ENCODE measurements at regions of chr7 and their contacts with region 1.

Region 1: DNA sequence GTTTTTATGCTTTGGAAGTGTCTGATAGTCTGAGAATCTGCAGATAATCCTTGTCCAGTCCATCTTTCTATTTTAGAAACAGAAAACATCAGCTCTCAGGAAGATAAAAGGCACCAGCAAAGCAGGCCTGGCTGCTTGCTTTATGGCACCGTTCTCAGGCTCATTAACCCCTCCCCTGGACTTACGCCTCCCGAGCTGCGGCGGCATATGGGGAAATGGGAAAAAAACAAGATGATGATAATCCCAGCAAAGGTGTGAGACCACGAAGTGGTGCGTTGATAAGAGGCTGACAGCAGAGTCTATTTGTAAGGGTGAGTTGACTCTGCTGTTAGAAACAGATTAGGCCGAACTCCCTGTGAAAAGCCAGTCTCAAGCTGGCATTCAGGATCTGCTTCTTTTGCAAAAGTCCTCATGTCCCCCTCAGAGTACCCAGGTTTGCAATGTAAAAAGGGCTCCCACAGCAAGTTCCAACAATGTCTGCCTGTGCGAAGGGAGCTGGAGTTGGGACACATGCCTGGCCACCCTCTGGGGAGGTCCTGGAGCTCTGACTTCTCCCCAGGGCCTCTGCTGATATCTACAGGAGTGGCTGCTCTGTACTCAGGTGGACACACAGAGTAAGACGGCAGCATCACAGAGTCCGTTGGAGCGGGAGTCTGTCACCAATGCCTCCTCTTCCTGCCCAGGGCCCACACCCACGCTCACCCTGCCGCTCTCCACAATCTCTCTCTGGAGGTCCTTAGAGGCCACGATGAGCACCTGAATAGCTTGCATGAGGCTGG is 54.3 kb downstream of the SPDYE5 start:
- DNase-seq: no peak
- H3K4me3 ChIP-seq: no peak overlapping the region
- H3K27ac ChIP-seq: peak overlapping the region in 1 of 59 donors; percentile 24
- H3K27me3 ChIP-seq: no peaks in the 10 kb centered on the region
- CTCF ChIP-seq: no peak

Region 2: DNA sequence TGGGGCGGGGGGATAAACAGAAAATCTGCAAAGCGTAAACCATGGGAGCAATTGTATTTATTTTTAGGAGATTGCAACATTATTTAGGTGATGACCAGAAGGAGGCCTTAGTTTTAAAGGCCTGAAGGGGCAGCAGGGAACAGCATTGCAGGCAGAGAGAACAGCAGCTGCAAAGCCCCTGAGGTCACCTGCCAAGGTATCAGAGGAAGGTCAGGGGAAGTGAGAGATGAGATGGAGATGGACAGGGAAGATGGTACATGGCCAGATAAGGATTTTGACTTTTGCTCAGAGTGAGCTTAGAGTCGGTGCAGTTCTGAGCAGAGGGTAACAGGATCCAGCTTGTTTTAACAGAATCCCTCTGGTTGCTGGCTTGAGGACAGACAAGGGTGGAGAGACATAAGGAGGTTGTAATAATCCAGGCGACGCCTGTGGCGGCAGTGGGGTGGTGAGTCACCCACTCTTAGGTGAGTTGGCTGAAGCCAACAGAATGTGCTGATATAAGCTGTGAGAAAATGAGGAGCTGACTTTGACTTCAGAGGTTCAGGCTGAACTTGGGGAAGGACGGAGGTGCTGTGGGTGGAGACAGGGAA is 971.2 kb before region 1 on chr7:
- intact Hi-C with region 1: loop called in 1 of 2 experiments (anchors 10 kb)
- DNase-seq: peak in 1 of 10 donors; percentile 10
- H3K4me3 ChIP-seq: no peak overlapping the region
- H3K27ac ChIP-seq: no peak overlapping the region
- H3K27me3 ChIP-seq: no peaks in the 10 kb centered on the region
- CTCF ChIP-seq: no peak

Region 3: DNA sequence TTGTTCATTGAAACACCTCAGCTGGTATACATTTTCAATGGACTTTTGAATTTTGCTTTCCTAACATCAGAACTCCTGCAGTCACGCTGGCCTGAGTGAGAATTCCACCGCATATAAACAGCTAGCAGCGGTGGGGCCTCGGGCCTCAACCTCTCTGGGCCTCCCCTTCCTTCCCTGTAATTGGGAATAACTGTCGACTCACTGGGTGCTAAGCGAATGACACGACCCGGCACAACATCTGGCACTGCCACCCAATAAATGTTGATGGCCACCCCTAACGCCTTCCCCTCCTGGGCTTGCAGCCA is 473.5 kb before region 1 on chr7:
- intact Hi-C with region 1: no loop called
- DNase-seq: no peak
- H3K4me3 ChIP-seq: peak overlapping the region; percentile 70 to 98 (median 88)
- H3K27ac ChIP-seq: peak overlapping the region in 58 of 59 donors; percentile 57 to 97 (median 92)
- H3K27me3 ChIP-seq: no peaks in the 10 kb centered on the region
- CTCF ChIP-seq: no peak

Region 4: DNA sequence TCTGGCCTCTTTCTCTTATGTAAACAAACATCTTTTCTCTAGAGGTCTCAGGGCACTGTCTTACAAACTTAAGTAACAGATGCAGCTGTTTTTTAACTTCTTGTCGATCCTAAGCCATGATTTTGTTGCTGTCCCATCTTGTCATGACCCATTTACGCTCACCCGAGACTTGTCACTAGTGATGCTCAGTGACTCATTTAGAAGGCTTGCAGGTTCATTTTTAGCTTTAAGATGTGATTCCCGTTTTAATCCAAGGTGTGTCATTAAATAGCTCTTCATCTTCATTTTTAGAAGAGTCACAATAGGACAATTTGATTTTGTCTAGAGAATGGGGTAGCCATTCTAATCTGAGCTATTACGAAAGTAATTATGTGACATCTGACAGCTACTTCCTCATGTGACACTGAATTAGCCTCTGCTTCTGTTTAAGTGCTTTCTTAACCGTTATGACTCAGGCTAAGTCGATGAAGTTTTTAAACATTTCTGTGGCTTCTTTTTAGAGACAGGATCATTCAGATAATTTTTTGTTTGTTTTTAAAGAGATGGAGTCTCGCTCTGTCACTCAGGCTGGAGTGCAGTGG is 11.6 kb before region 1 on chr7:
- intact Hi-C with region 1: loop called in 1 of 2 experiments (anchors 1 kb)
- DNase-seq: no peak
- H3K4me3 ChIP-seq: no peak overlapping the region
- H3K27ac ChIP-seq: peak overlapping the region in 5 of 59 donors; percentile 1 to 32 (median 7)
- H3K27me3 ChIP-seq: no peaks in the 10 kb centered on the region
- CTCF ChIP-seq: no peak

Region 5: GRCh38 chr7:75662579-75663301 is 116.3 kb after region 1 on chr7:
- intact Hi-C with region 1: no loop called
- DNase-seq: no peak
- H3K4me3 ChIP-seq: no peak overlapping the region
- H3K27ac ChIP-seq: peak overlapping the region in 58 of 59 donors; percentile 14 to 97 (median 89)
- H3K27me3 ChIP-seq: no peaks in the 10 kb centered on the region
- CTCF ChIP-seq: no peak